MCF 10A (cell line): ENCODE measurements at regions of chr7 and their contacts with region 1.

Region 1: GRCh38 chr7:28685644-28686417 is 272.3 kb downstream of the TRIL start:
- DNase-seq: peak; percentile 99
- H3K4me3 Mint-ChIP-seq: no peak overlapping the region
- H3K27ac Mint-ChIP-seq: no peak overlapping the region
- H3K4me1 Mint-ChIP-seq: peaks cover 9% of the 10 kb centered on the region
- H3K27me3 Mint-ChIP-seq: no peaks in the 10 kb centered on the region
- CTCF ChIP-seq: no peak

Region 2: DNA sequence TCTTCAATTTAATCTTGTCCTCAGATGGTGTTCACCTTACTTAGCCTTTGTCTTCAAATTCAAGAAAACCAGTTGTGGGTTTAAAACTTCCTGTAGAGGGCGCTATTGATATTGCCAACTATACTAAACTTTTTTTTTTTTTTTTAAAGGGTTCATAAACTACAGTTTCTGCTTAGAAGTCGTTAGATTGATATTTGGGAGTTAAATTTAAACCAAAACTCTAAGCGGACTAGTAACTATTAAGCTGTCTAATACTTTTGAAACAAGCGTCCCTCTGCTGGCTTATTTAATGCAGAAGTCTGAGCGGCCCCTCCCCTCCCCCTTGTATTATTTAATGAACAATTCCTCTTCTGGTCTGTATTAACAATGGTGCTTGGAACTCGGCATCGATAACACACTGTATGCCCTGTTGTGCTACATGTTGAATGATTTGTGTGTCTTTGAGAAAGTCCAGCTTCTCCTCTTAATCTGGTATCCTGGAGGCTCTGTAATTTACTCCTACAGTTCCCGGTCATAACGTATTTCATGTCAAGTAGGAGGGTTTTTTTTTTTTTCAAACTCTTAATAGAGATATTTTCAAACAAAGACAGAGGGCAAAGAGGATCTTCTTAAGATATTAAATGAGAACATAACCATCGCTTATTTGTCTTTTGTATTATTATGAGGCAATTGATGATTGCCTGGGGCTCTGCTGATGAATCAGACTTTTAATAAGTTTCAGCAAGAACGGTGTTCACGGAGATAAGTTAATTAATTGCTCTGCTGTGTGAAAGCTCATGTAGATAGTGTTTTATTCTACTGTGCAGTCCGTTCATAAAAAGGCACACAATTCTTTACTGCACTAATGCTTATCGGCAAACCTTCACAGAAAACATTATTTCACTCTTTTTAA is 296.1 kb before region 1 on chr7:
- CTCF ChIA-PET with region 1: no interaction called
- POLR2A ChIA-PET with region 1: no interaction called
- intact Hi-C with region 1: loop called (anchors 5 kb)
- DNase-seq: peak; percentile 61
- H3K4me3 Mint-ChIP-seq: peak overlapping the region; percentile 65
- H3K27ac Mint-ChIP-seq: peak overlapping the region; percentile 76
- H3K4me1 Mint-ChIP-seq: peaks cover 12% of the 10 kb centered on the region
- H3K27me3 Mint-ChIP-seq: no peaks in the 10 kb centered on the region
- CTCF ChIP-seq: peak; percentile 61

Region 3: GRCh38 chr7:28408960-28409715 is 276.7 kb before region 1 on chr7:
- CTCF ChIA-PET with region 1: no interaction called
- POLR2A ChIA-PET with region 1: interaction called, 6 read pairs
- intact Hi-C with region 1: loop called (anchors 5 kb)
- DNase-seq: peak; percentile 95
- H3K4me3 Mint-ChIP-seq: peak overlapping the region; percentile 79
- H3K27ac Mint-ChIP-seq: peak overlapping the region; percentile 90
- H3K4me1 Mint-ChIP-seq: peaks cover 35% of the 10 kb centered on the region
- H3K27me3 Mint-ChIP-seq: peaks cover 13% of the 10 kb centered on the region
- CTCF ChIP-seq: no peak

Region 4: DNA sequence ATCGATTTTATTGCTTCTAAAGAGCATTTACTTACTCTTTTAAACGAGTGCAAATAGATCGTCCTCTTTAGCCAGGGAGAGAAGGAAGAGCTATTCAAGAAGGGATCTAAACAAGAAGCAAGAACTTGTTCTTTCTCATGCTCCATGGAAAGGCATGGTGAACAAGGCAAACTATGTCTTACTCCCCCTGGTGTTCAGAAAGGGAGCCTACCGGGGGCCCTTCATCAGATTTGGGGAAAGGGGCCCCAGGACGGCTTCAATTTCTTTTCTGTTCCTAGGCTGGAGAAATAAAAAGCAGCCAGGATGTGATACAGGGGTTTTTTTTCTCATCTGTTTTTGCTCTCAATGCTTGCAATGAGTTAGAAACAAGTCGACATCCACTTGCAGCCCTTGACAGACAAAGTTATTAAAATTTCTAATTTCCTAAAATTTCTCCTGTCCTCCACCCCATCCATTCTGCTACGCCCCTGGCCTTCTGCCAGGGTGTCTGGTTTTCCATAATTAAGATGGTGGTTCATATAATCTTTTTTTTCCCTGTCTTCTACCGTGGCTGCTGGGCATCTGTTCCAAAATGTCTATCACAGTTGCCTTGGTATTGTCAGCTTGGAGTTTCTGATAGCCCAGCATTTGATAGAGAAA is 59.1 kb before region 1 on chr7:
- CTCF ChIA-PET with region 1: no interaction called
- POLR2A ChIA-PET with region 1: no interaction called
- intact Hi-C with region 1: loop called (anchors 5 kb)
- DNase-seq: peak; percentile 60
- H3K4me3 Mint-ChIP-seq: no peak overlapping the region
- H3K27ac Mint-ChIP-seq: no peak overlapping the region
- H3K4me1 Mint-ChIP-seq: peaks cover 5% of the 10 kb centered on the region
- H3K27me3 Mint-ChIP-seq: no peaks in the 10 kb centered on the region
- CTCF ChIP-seq: peak; percentile 67

Region 5: GRCh38 chr7:28674359-28674782 is 11.5 kb before region 1 on chr7:
- CTCF ChIA-PET with region 1: interaction called, 6 read pairs
- POLR2A ChIA-PET with region 1: interaction called, 11 read pairs
- intact Hi-C with region 1: no loop called
- DNase-seq: peak; percentile 79
- H3K4me3 Mint-ChIP-seq: peak overlapping the region; percentile 4
- H3K27ac Mint-ChIP-seq: peak overlapping the region; percentile 65
- H3K4me1 Mint-ChIP-seq: peaks cover 12% of the 10 kb centered on the region
- H3K27me3 Mint-ChIP-seq: no peaks in the 10 kb centered on the region
- CTCF ChIP-seq: no peak

Region 6: DNA sequence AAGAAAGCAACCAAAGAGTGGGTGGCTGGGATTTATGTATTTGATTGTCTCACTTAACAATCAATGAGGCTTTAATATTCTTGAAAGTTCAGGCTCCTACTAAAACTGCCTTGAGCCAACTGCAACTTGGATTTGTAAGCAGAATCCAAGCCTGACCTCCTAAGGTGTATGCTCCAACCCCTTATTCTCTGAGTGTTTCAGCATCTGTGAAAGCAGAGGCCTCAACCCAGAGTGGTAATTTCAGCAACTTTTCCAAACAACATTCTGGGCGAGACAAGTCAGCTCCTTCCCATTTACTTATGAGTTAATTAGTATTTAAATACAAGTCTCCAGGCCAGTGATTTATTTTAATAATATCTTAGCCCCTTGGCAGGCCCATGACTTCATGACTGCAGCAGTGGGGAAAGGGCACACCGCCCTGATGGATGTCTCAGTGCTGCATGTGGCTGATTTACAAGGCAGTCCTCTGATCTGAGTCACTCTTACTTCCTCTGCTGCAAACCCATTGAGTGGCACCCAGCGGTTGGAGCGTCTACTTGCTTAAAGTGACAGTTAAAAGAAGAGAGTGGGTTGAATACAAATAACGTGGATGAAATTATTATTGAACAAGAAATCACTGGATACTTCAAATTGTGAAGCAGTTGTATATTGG is 63.2 kb after region 1 on chr7:
- CTCF ChIA-PET with region 1: interaction called, 3 read pairs
- POLR2A ChIA-PET with region 1: interaction called, 4 read pairs
- intact Hi-C with region 1: loop called (anchors 5 kb)
- DNase-seq: peak; percentile 79
- H3K4me3 Mint-ChIP-seq: no peak overlapping the region
- H3K27ac Mint-ChIP-seq: peak overlapping the region; percentile 71
- H3K4me1 Mint-ChIP-seq: peaks cover 7% of the 10 kb centered on the region
- H3K27me3 Mint-ChIP-seq: no peaks in the 10 kb centered on the region
- CTCF ChIP-seq: no peak

Region 7: GRCh38 chr7:28853834-28854749 is 168.3 kb after region 1 on chr7:
- CTCF ChIA-PET with region 1: interaction called, 5 read pairs
- POLR2A ChIA-PET with region 1: no interaction called
- intact Hi-C with region 1: loop called (anchors 5 kb)
- DNase-seq: peak; percentile 74
- H3K4me3 Mint-ChIP-seq: peak overlapping the region; percentile 66
- H3K27ac Mint-ChIP-seq: no peak overlapping the region
- H3K4me1 Mint-ChIP-seq: peaks cover 19% of the 10 kb centered on the region
- H3K27me3 Mint-ChIP-seq: no peaks in the 10 kb centered on the region
- CTCF ChIP-seq: peak; percentile 92